ENCODE measurements at regions of chr10 and their contacts with region 1.

Region 1: DNA sequence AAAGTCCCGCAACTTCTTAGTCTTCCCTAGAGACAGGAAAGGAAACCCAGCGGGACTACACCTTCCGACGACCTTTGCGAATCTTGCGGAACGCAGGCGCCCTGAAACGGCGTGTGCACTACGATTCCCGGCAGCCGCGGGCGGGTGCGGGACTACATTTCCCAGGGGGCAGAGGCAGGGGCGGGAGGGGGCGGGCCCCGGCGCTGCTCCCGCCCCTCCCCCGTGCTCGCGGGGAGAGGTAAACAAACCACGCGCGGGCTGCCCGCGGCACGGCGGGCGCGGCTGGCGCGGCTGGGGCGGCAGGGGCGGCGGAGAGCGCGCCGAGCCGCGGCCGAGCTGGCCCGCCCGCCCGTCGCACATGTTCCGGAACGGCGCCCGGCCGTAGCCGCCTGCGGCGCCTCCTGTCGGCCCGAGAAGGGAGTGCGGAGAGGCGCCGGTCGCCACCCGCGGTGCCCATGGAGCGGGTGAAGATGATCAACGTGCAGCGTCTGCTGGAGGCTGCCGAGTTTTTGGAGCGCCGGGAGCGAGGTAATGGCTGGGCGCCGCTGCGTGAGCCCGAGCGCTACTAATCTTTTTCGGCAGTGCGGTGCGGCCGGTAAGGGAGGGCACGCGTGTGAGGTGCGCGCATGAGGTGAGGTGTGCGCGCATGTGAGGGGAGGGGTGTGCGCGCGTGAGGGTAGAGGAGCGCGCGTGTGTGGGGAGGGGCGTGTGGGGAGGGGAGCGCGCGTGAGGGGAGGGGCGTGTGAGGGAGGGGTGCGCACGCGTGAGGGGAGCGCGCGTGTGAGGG is 18.5 kb downstream of the MXI1 start:
- DNase-seq: peak; percentile 83 to 91 (median 88)
- ATAC-seq: peak; percentile 73
- H3K4me3 ChIP-seq: peak overlapping the region; percentile 75
- H3K4me3 Mint-ChIP-seq: peak overlapping the region; percentile 87 to 99 (median 94)
- H3K27ac ChIP-seq: peak overlapping the region; percentile 92
- H3K27ac Mint-ChIP-seq: peak overlapping the region; percentile 78 to 97 (median 96)
- H3K4me1 ChIP-seq: peaks cover 16 to 27% of the 10 kb centered on the region in 2 donors
- H3K4me1 Mint-ChIP-seq: peaks cover 27 to 68% (median 49%) of the 10 kb centered on the region in 7 donors
- H3K27me3 ChIP-seq: no peaks in the 10 kb centered on the region
- H3K27me3 Mint-ChIP-seq: no peaks in the 10 kb centered on the region

Region 2: DNA sequence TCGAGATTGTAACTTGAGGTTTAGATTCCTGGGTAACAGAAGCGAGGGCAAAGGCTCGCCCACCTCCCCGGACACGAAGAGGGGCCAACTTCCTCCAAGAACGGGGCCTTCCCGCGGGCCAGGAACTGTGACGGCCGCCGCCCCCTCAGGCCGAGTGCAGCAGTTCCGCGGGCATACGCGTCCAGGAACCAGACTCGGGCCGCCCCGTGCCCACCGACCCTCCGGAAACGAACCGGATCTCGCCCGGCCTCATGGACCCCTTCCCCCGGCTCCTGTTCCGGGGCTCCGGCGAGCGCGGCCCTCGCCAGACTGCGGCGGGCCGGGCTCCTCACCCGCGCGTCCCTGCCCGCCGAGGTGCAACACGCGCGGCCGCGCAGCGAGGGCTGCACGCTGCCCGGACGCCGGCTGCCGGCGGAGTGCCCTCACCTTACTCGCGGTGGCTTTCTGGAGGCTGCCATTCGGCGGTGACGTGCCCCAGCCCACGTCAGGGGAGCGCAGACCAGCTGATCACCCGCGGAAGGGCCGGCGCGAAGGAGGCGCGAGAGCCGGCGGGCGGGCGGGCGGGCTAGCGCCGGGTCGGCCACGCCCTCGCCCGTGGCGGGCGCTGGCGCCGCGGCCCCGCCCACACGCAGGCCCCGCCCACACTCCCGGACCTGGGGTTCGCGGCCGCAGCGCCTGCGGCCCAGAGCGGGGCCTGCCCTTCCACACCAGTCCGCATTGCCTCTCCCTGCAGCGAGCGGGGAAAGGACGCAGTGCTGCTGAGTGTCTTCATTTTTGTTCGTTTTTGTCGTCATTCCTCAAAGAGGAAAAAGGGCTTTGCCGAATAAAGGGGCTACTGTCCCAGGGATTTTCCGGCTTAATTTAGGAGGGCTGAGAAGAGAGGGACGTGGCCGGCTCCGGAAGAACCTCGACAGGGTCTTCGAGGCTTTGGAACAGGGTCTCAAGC is 302.7 kb before region 1 on chr10 and contains the start of gene XPNPEP1:
- CTCF ChIA-PET with region 1: no interaction called
- POLR2A ChIA-PET with region 1: interaction called, 3 read pairs
- intact Hi-C with region 1: loop called in 1 of 2 experiments (anchors 1 kb)
- DNase-seq: peak; percentile 55 to 90 (median 66)
- ATAC-seq: peak; percentile 98
- H3K4me3 ChIP-seq: peak within 1 kb of the TSS; percentile 67
- H3K4me3 Mint-ChIP-seq: peak within 1 kb of the TSS; percentile 78 to 94 (median 90)
- H3K27ac ChIP-seq: peak within 1 kb of the TSS; percentile 83
- H3K27ac Mint-ChIP-seq: peak within 1 kb of the TSS; percentile 75 to 95 (median 89)
- H3K4me1 ChIP-seq: peaks cover 30 to 39% of the 10 kb centered on the region in 2 donors
- H3K4me1 Mint-ChIP-seq: peaks cover 36 to 58% (median 54%) of the 10 kb centered on the region in 7 donors
- H3K27me3 ChIP-seq: no peaks in the 10 kb centered on the region
- H3K27me3 Mint-ChIP-seq: peaks cover 0 to 16% (median 0%) of the 10 kb centered on the region in 5 donors
- total RNA-seq, gene XPNPEP1: 44.1 to 100 (median 60.7) TPM

Region 3: DNA sequence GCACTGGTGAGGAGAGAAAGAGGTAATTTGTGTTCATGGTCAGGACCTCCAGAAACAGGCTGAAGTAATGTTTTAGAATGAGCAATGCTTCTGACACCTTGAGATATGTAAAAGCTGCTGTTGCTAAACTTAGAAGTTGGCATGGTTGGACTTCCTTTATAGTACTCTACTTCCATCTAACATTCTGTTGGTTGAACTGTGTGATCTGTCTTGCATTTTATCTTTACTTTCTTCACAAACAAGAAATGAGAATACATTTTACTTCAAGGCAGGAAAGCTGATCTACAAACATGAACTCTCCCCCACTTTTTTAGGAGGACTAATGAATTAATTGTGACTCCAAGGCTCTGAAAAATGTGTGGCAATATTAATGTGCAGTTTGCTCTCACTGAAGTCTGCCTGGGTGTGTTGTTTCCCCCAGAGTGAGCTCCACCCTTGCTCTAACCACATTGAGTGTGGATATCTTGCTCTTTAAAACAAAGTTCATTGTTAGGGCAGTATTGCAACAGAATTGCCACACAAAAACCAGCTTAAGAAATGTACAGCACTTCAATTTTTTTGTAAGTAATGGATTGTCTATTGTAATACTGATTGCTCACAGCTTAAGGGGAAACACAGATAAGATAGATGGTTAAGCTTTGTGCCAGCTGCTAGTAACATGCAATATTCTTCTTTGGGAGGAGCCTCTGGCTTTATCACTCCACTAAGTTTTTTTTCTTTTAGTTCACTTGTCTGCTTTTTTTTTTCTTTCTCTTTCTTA is 149.2 kb before region 1 on chr10:
- CTCF ChIA-PET with region 1: no interaction called
- POLR2A ChIA-PET with region 1: no interaction called
- intact Hi-C with region 1: loop called in 1 of 2 experiments (anchors 5 kb)
- DNase-seq: peak in 7 of 9 donors; percentile 47 to 74 (median 60)
- ATAC-seq: peak; percentile 85
- H3K4me3 ChIP-seq: peak overlapping the region; percentile 21
- H3K4me3 Mint-ChIP-seq: peak overlapping the region; percentile 73 to 92 (median 86)
- H3K27ac ChIP-seq: peak overlapping the region; percentile 56
- H3K27ac Mint-ChIP-seq: peak overlapping the region; percentile 79 to 97 (median 94)
- H3K4me1 ChIP-seq: peaks cover 69 to 84% of the 10 kb centered on the region in 2 donors
- H3K4me1 Mint-ChIP-seq: peaks cover 64 to 97% (median 87%) of the 10 kb centered on the region in 7 donors
- H3K27me3 ChIP-seq: no peaks in the 10 kb centered on the region
- H3K27me3 Mint-ChIP-seq: no peaks in the 10 kb centered on the region

Region 4: DNA sequence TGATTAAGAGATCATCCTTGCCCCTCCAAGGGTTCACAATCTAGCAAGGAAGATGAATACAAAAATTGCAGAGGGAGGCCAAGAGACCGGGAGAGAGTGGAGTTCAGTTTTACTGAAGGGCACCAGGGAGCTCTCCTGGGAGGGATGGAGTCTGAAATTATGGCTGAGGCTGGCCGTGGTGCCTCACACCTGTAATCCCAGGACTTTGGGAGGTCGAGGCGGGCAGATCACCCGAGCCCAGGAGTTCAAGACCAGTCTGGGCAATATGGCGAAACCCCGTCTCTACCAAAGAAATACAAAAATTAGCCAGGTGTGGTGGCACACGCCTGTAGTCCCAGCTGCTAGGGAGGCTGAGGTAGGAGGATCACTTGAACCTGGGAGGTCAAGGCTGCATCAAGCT is 69.9 kb before region 1 on chr10:
- CTCF ChIA-PET with region 1: no interaction called
- POLR2A ChIA-PET with region 1: no interaction called
- intact Hi-C with region 1: loop called in 1 of 2 experiments (anchors 1 kb)
- DNase-seq: no peak
- ATAC-seq: no peak
- H3K4me3 ChIP-seq: no peak overlapping the region
- H3K4me3 Mint-ChIP-seq: peak overlapping the region in 7 of 10 donors; percentile 4 to 74 (median 43)
- H3K27ac ChIP-seq: no peak overlapping the region
- H3K27ac Mint-ChIP-seq: peak overlapping the region in 5 of 9 donors; percentile 6 to 78 (median 67)
- H3K4me1 ChIP-seq: peaks cover 18 to 26% of the 10 kb centered on the region in 2 donors
- H3K4me1 Mint-ChIP-seq: peaks cover 15 to 48% (median 23%) of the 10 kb centered on the region in 7 donors
- H3K27me3 ChIP-seq: peaks cover 10 to 25% of the 10 kb centered on the region in 2 donors
- H3K27me3 Mint-ChIP-seq: peaks cover 34 to 86% (median 58%) of the 10 kb centered on the region in 5 donors

Region 5: GRCh38 chr10:110512461-110513187 is 286.7 kb after region 1 on chr10:
- CTCF ChIA-PET with region 1: no interaction called
- POLR2A ChIA-PET with region 1: no interaction called
- intact Hi-C with region 1: no loop called
- DNase-seq: peak in 1 of 9 donors; percentile 41
- ATAC-seq: peak; percentile 55
- H3K4me3 ChIP-seq: no peak overlapping the region
- H3K4me3 Mint-ChIP-seq: no peak overlapping the region
- H3K27ac ChIP-seq: no peak overlapping the region
- H3K27ac Mint-ChIP-seq: peak overlapping the region in 1 of 9 donors; percentile 52
- H3K4me1 ChIP-seq: no peaks in the 10 kb centered on the region
- H3K4me1 Mint-ChIP-seq: peaks cover 0 to 48% (median 0%) of the 10 kb centered on the region in 7 donors
- H3K27me3 ChIP-seq: no peaks in the 10 kb centered on the region
- H3K27me3 Mint-ChIP-seq: no peaks in the 10 kb centered on the region

Region 6: DNA sequence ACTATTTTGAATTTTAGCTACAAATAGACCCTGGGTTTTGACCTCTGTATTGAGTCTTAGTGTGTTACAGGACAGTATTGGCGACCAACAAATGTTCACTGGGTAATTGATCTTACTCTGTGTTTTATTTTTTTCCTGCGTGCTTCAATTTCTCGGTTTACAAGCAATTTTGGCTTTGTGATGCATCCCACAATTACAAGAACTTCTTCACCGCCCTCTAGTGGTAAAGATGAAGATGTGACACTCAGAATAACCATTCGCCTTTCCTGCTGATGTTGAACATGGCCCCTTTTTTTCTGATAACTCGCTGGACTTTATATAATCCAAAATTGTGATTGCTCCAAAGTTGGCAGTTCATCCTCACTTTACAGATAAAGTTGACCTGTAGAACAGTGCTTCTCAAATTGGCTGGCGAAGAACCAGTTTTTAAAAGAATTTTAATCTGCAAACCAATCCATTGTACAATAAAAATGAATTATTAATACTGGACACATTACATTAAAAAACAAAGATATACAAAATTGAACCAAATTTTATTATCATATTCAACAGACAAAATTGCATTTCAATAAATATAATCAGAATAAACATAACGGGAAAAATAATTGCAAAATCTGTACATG is 321.3 kb after region 1 on chr10:
- CTCF ChIA-PET with region 1: no interaction called
- POLR2A ChIA-PET with region 1: no interaction called
- intact Hi-C with region 1: loop called in 1 of 2 experiments (anchors 5 kb)
- DNase-seq: peak in 7 of 9 donors; percentile 40 to 75 (median 68)
- ATAC-seq: peak; percentile 85
- H3K4me3 ChIP-seq: no peak overlapping the region
- H3K4me3 Mint-ChIP-seq: peak overlapping the region in 1 of 10 donors; percentile 2
- H3K27ac ChIP-seq: no peak overlapping the region
- H3K27ac Mint-ChIP-seq: peak overlapping the region in 2 of 9 donors; percentile 3 to 6
- H3K4me1 ChIP-seq: peaks cover 0 to 5% of the 10 kb centered on the region in 2 donors
- H3K4me1 Mint-ChIP-seq: peaks cover 3 to 16% (median 5%) of the 10 kb centered on the region in 7 donors
- H3K27me3 ChIP-seq: no peaks in the 10 kb centered on the region
- H3K27me3 Mint-ChIP-seq: peaks cover 0 to 39% (median 11%) of the 10 kb centered on the region in 5 donors